Left ventricle myocardium superior (tissue), 1 donor: ENCODE measurements at regions of chr11 and their contacts with region 1.

Region 1: DNA sequence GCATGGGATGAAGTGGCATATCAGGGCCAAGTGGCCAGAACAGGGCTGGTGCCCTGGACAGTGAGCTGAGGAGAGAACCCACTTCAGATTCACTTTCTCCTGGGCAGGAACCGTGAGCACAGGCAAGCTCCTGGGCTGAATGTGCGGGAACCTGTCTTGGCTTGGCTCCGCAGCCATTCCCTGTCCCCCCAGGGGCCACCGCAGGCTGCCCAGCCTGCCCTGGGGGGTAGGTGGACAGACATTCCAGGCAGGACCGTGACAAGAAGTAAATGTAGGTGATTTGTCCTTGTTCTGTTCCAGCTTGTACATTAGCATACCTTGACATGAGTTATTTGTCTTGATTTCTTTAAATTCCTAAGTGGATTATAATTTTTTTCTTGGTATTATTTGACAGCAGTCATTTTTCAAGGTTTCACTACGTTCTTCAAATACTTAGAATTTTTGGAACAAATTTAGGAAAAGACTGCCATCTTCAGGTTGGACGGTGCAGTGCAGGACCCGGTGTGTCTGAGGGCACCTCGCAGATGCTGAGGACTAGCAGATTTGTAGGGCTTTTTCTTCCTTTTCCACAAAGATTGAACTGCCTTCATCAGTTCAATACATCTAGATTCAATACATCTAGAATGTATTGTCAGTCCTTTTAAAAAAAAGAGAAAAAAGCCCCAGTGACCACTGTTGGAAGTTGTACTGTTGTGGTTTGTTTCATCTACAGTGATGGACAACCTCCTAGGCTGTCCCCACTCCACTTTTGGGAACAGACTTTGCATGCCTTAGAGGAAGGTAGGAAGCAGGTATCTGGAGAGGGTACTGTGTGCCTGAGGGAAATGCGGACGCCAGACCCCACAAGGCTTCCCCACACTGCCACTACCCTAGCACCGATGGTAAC is 115.1 kb upstream of the RASSF10 start:
- DNase-seq: peak; percentile 67
- ATAC-seq: no peak

Region 2: DNA sequence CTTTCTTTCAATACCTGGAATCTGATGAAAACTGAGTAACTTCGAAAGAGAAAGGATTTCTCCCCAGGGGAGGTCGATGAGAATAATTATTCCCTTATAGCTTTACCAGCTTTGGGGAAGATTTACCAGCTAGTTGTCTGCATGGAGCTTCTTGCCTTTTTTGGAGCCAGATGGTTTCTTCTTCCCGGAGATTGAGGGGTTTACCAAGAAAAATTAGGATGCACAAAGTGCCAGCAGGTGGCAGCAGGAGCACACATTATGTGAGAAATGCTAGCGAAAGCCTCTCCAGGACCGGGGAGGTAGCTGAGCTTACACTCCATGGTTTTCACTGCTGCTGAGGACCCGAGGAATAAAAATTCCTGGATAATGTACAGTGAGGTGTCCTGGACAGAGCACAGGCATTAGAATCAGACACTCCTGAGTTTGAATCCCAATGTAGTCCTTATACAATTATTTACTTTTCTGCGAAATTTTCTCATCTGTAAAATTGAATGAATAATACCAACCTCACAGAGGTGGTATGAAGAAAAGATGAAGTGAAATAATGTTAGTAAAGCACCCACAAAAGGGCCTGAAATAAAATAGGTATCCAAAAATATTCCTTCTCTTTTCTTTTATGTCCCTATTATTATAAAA is 562.7 kb before region 1 on chr11:
- intact Hi-C with region 1: loop called (anchors 5 kb)
- DNase-seq: peak; percentile 86
- ATAC-seq: peak; percentile 84

Region 3: DNA sequence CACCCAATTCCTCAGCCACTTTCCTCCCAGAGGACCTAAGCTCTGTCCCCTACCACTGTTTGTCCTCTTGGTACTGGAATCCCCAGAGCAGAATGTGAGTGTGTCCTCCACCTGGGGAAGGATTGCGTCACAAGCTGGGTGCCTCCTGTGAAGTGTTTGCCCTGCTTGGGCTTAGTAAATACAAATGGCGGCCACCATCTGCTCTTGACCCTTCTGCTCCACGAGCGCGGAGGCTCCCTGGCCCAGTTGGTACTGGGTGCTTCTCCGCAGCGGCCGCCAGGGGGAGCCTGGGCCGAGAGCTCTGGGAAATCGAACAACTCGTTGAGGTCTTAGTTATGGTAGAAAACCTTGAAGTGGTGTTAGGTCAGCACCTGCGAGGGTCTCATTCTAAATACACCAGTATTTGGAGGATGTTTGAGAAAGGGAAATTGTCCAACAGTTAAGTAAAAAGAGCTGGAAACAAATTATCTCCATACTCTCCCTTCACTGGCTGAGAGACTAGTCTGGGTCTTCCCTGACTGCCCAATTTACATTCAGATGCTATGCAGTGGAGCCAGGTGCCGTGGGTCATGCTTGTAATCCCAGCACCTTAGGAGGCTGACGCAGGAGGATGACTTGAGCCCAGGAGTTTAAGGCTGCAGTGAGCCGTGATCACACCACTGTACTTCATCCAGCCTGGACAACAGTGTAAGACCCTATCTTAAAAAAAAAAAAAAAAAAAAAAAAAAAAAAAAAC is 294.5 kb before region 1 on chr11:
- intact Hi-C with region 1: loop called (anchors 5 kb)
- DNase-seq: peak; percentile 69
- ATAC-seq: peak; percentile 79

Region 4: GRCh38 chr11:12680246-12680939 is 213.6 kb before region 1 on chr11:
- intact Hi-C with region 1: loop called (anchors 10 kb)
- DNase-seq: peak; percentile 92
- ATAC-seq: peak; percentile 91

Region 5: DNA sequence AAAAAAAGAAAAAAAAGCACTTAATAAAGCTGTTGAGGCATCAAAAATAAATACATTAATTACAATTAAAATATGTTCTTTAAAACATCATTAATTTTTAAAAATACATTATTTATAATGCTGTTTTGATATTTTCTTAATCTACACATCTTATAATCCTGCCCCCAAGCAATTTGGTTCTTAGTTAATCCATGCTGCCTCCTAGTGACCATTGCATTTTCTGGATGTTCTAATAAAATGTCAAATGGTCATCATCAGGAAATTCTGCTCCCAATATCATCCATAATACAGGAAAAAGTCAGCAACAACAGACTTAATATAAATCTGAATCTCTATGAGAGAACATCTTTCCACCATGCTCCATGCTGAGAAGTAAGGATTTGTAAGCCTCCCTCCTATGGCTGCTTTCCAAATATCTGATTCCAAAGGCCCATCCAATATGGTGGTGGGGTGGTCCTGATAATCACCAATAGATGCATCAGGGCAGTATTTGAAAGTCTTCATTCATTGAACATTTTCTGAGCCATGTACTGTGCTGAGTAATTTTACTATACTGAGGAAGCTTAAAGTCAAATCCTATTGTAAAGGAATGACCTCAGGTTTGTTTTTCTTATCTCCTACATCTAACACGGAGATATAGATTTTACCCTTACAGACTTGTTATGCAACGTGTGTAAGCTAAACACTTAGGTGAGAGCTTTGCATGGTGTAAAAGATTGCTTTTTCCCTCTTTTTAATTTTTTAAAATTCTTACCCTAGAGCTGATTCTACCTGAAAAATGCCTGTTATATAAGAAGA is 258.9 kb after region 1 on chr11:
- intact Hi-C with region 1: no loop called
- DNase-seq: no peak
- ATAC-seq: no peak